ENCODE measurements at regions of chr12 and their contacts with region 1.

Region 1: GRCh38 chr12:111024205-111024801 is 103.9 kb upstream of the MYL2 start:
- DNase-seq: no peak
- ATAC-seq: peak; percentile 97
- H3K4me3 ChIP-seq: no peak overlapping the region
- H3K27ac ChIP-seq: no peak overlapping the region
- H3K4me1 ChIP-seq: no peaks in the 10 kb centered on the region
- H3K27me3 ChIP-seq: peaks cover 13% of the 10 kb centered on the region
- CTCF ChIP-seq: peak; percentile 93

Region 2: GRCh38 chr12:111056618-111057521 is 32.6 kb after region 1 on chr12:
- CTCF ChIA-PET with region 1: no interaction called
- POLR2A ChIA-PET with region 1: no interaction called
- in situ Hi-C with region 1: no loop called
- intact Hi-C with region 1: no loop called
- DNase-seq: no peak
- ATAC-seq: no peak
- H3K4me3 ChIP-seq: no peak overlapping the region
- H3K27ac ChIP-seq: no peak overlapping the region
- H3K4me1 ChIP-seq: no peaks in the 10 kb centered on the region
- H3K27me3 ChIP-seq: no peaks in the 10 kb centered on the region
- CTCF ChIP-seq: no peak

Region 3: DNA sequence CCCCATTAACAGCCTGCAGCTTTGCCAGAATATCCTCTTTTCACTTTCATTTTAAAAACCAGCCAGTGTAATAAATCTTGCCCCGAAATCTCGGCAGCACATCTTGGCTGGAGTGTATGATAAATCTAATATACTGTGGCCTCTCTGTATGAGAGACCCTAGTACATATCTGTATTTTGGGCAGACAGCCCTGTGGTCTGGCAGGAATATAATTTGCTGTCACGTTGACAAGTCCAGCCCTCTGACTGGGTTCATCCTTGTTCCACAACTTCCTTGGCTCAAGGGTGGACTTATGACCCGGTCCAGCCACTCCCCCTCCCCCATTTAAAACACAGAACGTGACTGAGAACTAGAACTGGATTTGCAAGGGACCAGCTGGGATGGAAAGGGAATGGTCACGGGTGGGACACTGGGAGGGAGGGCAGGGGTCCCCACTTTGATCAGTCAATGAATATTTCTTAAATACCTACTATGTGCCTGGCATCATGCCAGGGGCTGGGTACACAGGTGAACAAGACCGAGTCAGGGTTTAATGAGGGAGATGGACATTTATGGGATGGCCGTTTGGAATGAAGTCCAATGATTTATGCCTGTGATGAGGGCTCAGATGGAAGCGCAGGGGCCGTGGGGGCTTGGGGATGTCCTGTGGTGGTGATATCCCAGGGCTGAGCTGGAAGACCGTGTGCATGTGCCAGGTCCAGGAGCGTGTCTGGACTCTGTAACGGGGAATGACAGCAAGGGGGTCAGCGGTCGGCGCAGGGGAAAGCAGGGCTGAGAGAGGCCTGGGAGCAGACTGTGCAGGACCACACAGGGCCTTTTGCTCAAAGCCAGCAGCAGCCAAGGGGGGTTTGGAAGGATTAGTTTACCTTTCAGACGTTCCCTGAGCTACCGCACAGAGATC is 154.1 kb after region 1 on chr12:
- CTCF ChIA-PET with region 1: interaction called, 6 read pairs
- POLR2A ChIA-PET with region 1: no interaction called
- in situ Hi-C with region 1: no loop called
- intact Hi-C with region 1: loop called (anchors 5 kb)
- DNase-seq: no peak
- ATAC-seq: no peak
- H3K4me3 ChIP-seq: no peak overlapping the region
- H3K27ac ChIP-seq: no peak overlapping the region
- H3K4me1 ChIP-seq: no peaks in the 10 kb centered on the region
- H3K27me3 ChIP-seq: peaks cover 4% of the 10 kb centered on the region; the same call in 1 of the 2 replicates
- CTCF ChIP-seq: no peak

Region 4: DNA sequence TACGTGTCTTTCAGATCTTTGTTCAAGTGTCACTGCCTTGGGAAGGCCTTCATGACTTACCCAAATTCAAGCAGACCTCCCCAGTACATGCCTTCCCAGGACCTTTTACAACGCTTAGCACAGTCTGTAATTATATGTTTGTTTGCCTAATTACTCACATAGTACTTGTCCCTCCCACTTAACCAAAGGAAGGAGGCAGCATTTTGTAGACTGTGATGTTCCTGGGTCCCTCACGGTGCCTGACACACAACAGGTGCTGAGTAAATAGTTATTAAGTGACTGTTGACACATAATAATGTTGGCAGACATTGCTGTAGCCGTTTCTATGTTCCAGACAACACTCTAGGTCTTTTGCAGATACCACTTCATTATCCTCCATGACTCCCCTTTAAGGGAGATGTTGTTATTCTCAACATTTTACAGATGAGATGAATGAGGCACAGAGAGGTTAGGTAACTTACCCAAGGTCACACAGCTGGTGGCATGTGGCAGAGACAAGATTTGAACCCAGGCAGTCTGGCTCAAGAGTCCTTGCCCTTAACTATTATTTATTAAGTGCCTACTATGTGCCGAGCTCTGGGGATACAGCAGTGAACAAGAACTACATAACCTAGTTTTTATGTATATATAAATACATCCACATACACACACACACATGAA is 213.9 kb after region 1 on chr12:
- CTCF ChIA-PET with region 1: interaction called, 10 read pairs
- POLR2A ChIA-PET with region 1: no interaction called
- in situ Hi-C with region 1: no loop called
- intact Hi-C with region 1: no loop called
- DNase-seq: no peak
- ATAC-seq: no peak; the same call in 1 of the 2 replicates
- H3K4me3 ChIP-seq: no peak overlapping the region
- H3K27ac ChIP-seq: no peak overlapping the region
- H3K4me1 ChIP-seq: no peaks in the 10 kb centered on the region
- H3K27me3 ChIP-seq: peaks cover 10% of the 10 kb centered on the region
- CTCF ChIP-seq: no peak

Region 5: GRCh38 chr12:111298582-111299436 is 274.5 kb after region 1 on chr12:
- CTCF ChIA-PET with region 1: interaction called, 3 read pairs
- POLR2A ChIA-PET with region 1: no interaction called
- in situ Hi-C with region 1: no loop called
- intact Hi-C with region 1: loop called (anchors 5 kb)
- DNase-seq: no peak
- ATAC-seq: peak; percentile 87
- H3K4me3 ChIP-seq: no peak overlapping the region
- H3K27ac ChIP-seq: no peak overlapping the region
- H3K4me1 ChIP-seq: no peaks in the 10 kb centered on the region
- H3K27me3 ChIP-seq: peaks cover 6% of the 10 kb centered on the region; the same call in 1 of the 2 replicates
- CTCF ChIP-seq: peak; percentile 95

Region 6: DNA sequence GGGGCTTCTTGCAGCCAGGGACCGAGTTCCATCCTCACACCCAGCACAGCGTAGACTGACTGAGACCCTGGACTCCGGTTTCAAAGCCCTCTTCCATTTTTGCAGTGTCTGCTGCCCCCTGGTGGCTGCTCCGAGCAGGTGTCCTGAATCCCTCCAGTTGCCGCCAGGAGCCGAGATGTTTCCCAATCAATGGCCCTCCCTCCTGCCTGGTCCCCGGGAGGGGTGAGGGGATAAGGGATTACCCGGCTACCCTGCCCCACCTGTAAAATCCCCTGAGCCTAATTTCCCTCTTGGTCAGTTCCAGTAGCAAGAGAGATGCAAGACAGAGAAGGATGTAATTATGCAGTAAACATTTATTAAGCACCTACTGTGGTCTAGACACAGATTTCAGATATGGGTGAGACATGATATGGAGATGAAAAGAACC is 289.5 kb after region 1 on chr12:
- CTCF ChIA-PET with region 1: no interaction called
- POLR2A ChIA-PET with region 1: no interaction called
- in situ Hi-C with region 1: no loop called
- intact Hi-C with region 1: loop called (anchors 5 kb)
- DNase-seq: peak; percentile 45
- ATAC-seq: peak; percentile 86
- H3K4me3 ChIP-seq: peak overlapping the region in 1 of 2 experiments; percentile 13; a peak in 1 of 4 replicates
- H3K27ac ChIP-seq: no peak overlapping the region
- H3K4me1 ChIP-seq: peaks cover 2% of the 10 kb centered on the region; the same call in 1 of the 2 replicates
- H3K27me3 ChIP-seq: no peaks in the 10 kb centered on the region
- CTCF ChIP-seq: peak; percentile 96

Measured in Panc1 (cell line).